CD4-positive, alpha-beta T cell (primary cell): ENCODE measurements at regions of chrX and their contacts with region 1.

Region 1: GRCh38 chrX:101287402-101287801 is 3.7 kb downstream of the TAF7L start:
- DNase-seq: peak in 4 of 14 experiments; percentile 8 to 40 (median 35)
- ATAC-seq: no peak
- H3K4me3 ChIP-seq: no peak overlapping the region
- H3K4me3 Mint-ChIP-seq: no peak overlapping the region
- H3K27ac ChIP-seq: no peak overlapping the region
- H3K27ac Mint-ChIP-seq: no peak overlapping the region
- H3K4me1 ChIP-seq: no peaks in the 10 kb centered on the region
- H3K4me1 Mint-ChIP-seq: no peaks in the 10 kb centered on the region
- H3K27me3 ChIP-seq: no peaks in the 10 kb centered on the region
- H3K27me3 Mint-ChIP-seq: peaks cover 3% of the 10 kb centered on the region
- CTCF ChIP-seq: peak; percentile 54

Region 2: DNA sequence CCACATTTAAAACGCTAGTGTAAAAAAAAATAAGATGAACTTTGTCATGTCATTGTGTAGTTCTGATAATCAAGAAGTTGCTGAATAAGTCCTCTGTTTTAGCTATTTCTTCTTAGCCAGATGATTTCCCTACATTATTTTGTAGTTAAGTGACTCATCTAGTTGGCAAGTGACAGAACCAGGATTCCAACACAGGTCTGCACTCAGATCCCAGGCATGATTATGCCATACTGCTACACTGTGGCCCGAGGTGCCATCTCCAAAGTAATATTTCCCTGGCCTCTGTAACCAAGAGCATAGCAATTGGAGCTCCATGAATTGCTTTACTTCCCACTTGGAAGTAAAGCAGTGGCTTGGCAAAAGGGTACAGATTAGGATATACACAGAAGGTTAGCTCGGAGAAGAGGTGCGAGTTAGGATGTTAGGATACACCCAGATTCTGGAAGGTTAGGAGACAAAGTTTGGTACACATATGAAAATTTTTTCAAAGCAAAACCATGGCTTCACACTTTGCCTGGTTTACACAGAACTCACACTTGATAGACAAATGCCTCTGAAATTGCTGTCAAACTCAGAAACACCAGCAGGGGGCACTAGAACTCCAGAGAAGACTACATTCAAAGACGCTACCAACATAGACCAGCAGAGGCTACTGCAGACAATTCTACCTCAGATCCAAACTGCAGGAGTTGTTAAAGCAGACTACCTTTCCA is 602.0 kb before region 1 on chrX:
- CTCF ChIA-PET with region 1: no interaction called
- POLR2A ChIA-PET with region 1: no interaction called
- intact Hi-C with region 1: loop called (anchors 1 to 2 kb)
- DNase-seq: peak; percentile 31 to 75 (median 45)
- ATAC-seq: peak; percentile 64
- H3K4me3 ChIP-seq: no peak overlapping the region
- H3K4me3 Mint-ChIP-seq: no peak overlapping the region
- H3K27ac ChIP-seq: no peak overlapping the region
- H3K27ac Mint-ChIP-seq: no peak overlapping the region
- H3K4me1 ChIP-seq: no peaks in the 10 kb centered on the region
- H3K4me1 Mint-ChIP-seq: no peaks in the 10 kb centered on the region
- H3K27me3 ChIP-seq: no peaks in the 10 kb centered on the region
- H3K27me3 Mint-ChIP-seq: peaks cover 6% of the 10 kb centered on the region
- CTCF ChIP-seq: peak; percentile 69

Region 3: GRCh38 chrX:100895365-100896075 is 391.9 kb before region 1 on chrX:
- CTCF ChIA-PET with region 1: no interaction called
- POLR2A ChIA-PET with region 1: no interaction called
- intact Hi-C with region 1: loop called (anchors 1 to 2 kb)
- DNase-seq: peak in 10 of 14 experiments; percentile 0 to 43 (median 10)
- ATAC-seq: no peak
- H3K4me3 ChIP-seq: no peak overlapping the region
- H3K4me3 Mint-ChIP-seq: no peak overlapping the region
- H3K27ac ChIP-seq: no peak overlapping the region
- H3K27ac Mint-ChIP-seq: no peak overlapping the region
- H3K4me1 ChIP-seq: no peaks in the 10 kb centered on the region
- H3K4me1 Mint-ChIP-seq: no peaks in the 10 kb centered on the region
- H3K27me3 ChIP-seq: no peaks in the 10 kb centered on the region
- H3K27me3 Mint-ChIP-seq: no peaks in the 10 kb centered on the region
- CTCF ChIP-seq: peak; percentile 32

Region 4: DNA sequence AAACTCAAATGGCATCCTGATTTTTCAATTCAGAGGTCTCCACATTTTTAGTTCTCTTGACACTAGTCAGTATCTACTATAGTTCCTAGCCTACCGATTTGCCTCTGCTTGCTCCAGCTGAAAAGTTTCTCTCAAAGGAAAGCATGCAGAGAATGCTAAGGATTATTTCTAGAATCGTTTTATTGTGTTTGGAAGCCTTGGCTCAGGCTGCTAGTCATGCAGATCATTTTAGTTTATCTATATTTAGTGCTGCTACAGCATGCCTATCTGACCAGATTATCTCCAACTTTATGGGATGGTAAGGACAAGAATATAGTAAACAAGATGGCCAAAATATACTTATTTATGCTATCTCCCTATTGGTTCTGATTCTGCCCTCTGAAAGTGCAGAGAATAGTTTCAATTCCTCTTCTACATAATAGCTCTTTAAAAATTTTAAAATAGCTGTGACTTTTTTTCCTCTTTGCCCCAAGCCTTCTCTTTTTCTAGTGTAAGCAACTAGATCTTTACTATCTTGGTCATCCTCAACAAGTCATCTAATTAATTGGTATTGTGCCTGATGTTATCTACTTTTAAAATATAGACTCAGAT is 83.5 kb before region 1 on chrX:
- CTCF ChIA-PET with region 1: no interaction called
- POLR2A ChIA-PET with region 1: no interaction called
- intact Hi-C with region 1: no loop called
- DNase-seq: no peak
- ATAC-seq: no peak
- H3K4me3 ChIP-seq: no peak overlapping the region
- H3K4me3 Mint-ChIP-seq: no peak overlapping the region
- H3K27ac ChIP-seq: no peak overlapping the region
- H3K27ac Mint-ChIP-seq: no peak overlapping the region
- H3K4me1 ChIP-seq: peaks cover 4% of the 10 kb centered on the region
- H3K4me1 Mint-ChIP-seq: peaks cover 12% of the 10 kb centered on the region
- H3K27me3 ChIP-seq: no peaks in the 10 kb centered on the region
- H3K27me3 Mint-ChIP-seq: no peaks in the 10 kb centered on the region
- CTCF ChIP-seq: no peak